ENCODE measurements at regions of chr3 and their contacts with region 1.

Region 1: DNA sequence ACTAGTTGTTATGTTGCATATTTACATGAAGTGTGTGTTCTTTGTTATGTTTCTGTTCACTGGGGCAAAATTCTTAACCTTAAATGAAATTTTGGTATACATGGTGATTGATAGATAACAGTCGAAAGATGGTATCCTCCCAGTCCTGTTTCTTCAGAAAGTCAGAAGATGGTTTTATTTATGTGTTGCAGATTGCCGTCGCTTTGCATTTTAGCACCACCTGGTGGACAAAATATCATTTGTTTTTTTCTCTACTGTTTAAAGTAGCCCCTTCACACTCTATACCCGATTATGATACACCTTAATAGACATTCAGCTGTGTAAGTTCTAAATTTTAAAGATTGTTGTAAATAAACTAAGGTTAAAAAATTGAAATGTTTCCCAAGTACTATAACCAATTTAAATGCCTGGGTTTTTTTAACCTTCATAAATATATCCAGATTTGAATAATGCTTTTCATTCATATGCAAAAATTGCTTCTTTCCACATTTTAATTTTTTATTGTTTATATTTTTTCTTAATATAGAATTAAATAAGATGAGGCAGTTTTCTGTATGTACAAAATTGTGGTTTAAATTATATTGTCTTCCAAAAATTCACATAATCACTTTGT is 152.2 kb downstream of the ALCAM start:
- DNase-seq: peak; percentile 78
- H3K4me3 ChIP-seq: no peak overlapping the region
- H3K27ac ChIP-seq: no peak overlapping the region
- H3K4me1 ChIP-seq: no peaks in the 10 kb centered on the region
- H3K27me3 ChIP-seq: no peaks in the 10 kb centered on the region
- CTCF ChIP-seq: peak; percentile 32 to 43
- POLR2A ChIP-seq: no peak

Region 2: GRCh38 chr3:104102386-104102785 is 1416.5 kb before region 1 on chr3:
- CTCF ChIA-PET with region 1: interaction called, 24 read pairs
- POLR2A ChIA-PET with region 1: no interaction called
- dilution Hi-C with region 1: no loop called
- intact Hi-C with region 1: loop called (anchors 1 kb)
- DNase-seq: peak; percentile 60
- H3K4me3 ChIP-seq: no peak overlapping the region
- H3K27ac ChIP-seq: no peak overlapping the region
- H3K4me1 ChIP-seq: no peaks in the 10 kb centered on the region
- H3K27me3 ChIP-seq: peaks cover 2 to 9% of the 10 kb centered on the region in 2 experiments
- CTCF ChIP-seq: peak; percentile 58 to 68
- POLR2A ChIP-seq: no peak

Region 3: DNA sequence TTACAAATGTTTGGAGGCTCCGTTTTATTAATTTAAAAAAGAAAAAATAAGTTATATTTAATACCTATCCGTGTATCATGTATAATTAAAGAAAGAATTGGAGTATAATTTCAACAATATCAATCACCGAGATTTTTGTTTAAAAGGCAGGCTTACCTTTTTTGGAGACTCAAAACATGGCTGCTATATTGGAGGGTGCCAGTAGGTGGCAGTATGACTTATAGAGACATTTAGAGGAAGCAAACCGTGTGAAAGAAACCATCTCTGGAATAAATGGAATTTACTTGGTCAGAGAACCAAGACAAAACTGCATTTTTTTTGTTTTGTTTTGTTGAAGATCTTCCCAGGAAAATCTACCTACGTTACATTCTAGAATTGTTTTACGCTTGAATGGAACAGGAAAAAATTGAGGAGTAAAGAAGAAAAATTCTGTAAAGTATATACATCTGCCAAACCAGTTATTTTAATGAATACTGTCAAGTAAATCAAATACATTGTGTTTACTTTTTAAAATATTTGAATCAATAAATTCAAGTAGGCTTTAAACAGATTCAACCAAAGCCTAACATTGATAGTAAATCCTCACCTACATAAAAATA is 954.8 kb before region 1 on chr3:
- CTCF ChIA-PET with region 1: no interaction called
- POLR2A ChIA-PET with region 1: no interaction called
- dilution Hi-C with region 1: no loop called
- intact Hi-C with region 1: loop called (anchors 1 kb)
- DNase-seq: peak; percentile 47
- H3K4me3 ChIP-seq: no peak overlapping the region
- H3K27ac ChIP-seq: no peak overlapping the region
- H3K4me1 ChIP-seq: no peaks in the 10 kb centered on the region
- H3K27me3 ChIP-seq: no peaks in the 10 kb centered on the region
- CTCF ChIP-seq: peak; percentile 45 to 52
- POLR2A ChIP-seq: no peak

Region 4: GRCh38 chr3:104604369-104605010 is 914.4 kb before region 1 on chr3:
- CTCF ChIA-PET with region 1: interaction called, 16 read pairs
- POLR2A ChIA-PET with region 1: no interaction called
- dilution Hi-C with region 1: no loop called
- intact Hi-C with region 1: loop called (anchors 2 kb)
- DNase-seq: peak; percentile 73
- H3K4me3 ChIP-seq: no peak overlapping the region
- H3K27ac ChIP-seq: peak overlapping the region; percentile 25
- H3K4me1 ChIP-seq: peaks cover 10% of the 10 kb centered on the region
- H3K27me3 ChIP-seq: no peaks in the 10 kb centered on the region
- CTCF ChIP-seq: peak; percentile 25 to 35
- POLR2A ChIP-seq: no peak

Region 5: GRCh38 chr3:105083945-105084344 is 435.0 kb before region 1 on chr3:
- CTCF ChIA-PET with region 1: no interaction called
- POLR2A ChIA-PET with region 1: no interaction called
- dilution Hi-C with region 1: no loop called
- intact Hi-C with region 1: loop called (anchors 10 kb)
- DNase-seq: no peak
- H3K4me3 ChIP-seq: no peak overlapping the region
- H3K27ac ChIP-seq: no peak overlapping the region
- H3K4me1 ChIP-seq: no peaks in the 10 kb centered on the region
- H3K27me3 ChIP-seq: no peaks in the 10 kb centered on the region
- CTCF ChIP-seq: no peak
- POLR2A ChIP-seq: no peak

Region 6: GRCh38 chr3:106609666-106610301 is 1090.9 kb after region 1 on chr3:
- CTCF ChIA-PET with region 1: interaction called, 14 read pairs
- POLR2A ChIA-PET with region 1: no interaction called
- dilution Hi-C with region 1: no loop called
- intact Hi-C with region 1: loop called (anchors 2 kb)
- DNase-seq: peak; percentile 92
- H3K4me3 ChIP-seq: no peak overlapping the region
- H3K27ac ChIP-seq: no peak overlapping the region
- H3K4me1 ChIP-seq: peaks cover 18% of the 10 kb centered on the region
- H3K27me3 ChIP-seq: no peaks in the 10 kb centered on the region
- CTCF ChIP-seq: peak; percentile 75 to 90
- POLR2A ChIP-seq: no peak

Measured in endothelial cell of umbilical vein (primary cell).